Heart right ventricle (tissue), 16 donors: ENCODE measurements at regions of chr11 and their contacts with region 1.

Region 1: DNA sequence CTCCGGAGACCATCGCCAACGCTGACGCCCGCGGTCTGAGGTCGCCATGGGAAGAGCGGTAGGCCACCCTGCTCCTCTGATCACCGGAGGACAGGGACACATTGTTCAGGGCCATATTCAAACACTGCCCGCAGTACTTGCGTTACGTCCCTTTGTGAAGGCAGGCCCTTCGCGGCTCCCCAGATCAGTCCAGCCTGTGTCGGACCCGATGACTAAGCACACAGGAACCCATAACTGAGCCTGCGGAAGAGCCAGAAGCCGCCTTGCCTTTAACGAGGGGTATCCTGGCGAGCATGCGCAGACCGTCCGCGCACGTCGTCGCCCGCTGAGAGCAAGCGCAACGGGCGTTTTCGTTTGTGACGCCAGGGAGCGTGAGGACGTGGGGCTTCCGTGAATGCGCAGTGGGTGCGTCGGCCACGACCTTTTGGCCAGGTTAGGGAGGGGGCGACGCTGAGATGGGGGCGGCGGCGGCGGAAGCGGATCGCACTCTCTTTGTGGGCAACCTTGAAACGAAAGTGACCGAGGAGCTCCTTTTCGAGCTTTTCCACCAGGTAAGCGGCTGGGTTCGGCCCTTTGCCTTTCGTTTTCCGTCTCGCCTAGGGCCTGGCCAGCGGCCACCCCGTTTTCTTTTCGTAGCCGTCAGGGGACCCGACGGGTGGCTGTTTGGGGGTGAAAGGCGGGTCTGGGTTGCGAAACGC is at the starts of genes C11orf71 and RBM7:
- DNase-seq: peak; percentile 98 to 99
- ATAC-seq: peak; percentile 97 to 99 (median 98)
- H3K4me3 ChIP-seq: peak within 1 kb of the TSS; percentile 66 to 89 (median 76)
- H3K27ac ChIP-seq: peak within 1 kb of the TSS; percentile 93 to 100 (median 98)
- H3K4me1 ChIP-seq: peaks cover 0 to 73% (median 59%) of the 10 kb centered on the region in 9 donors
- H3K27me3 ChIP-seq: no peaks in the 10 kb centered on the region
- CTCF ChIP-seq: peak in 3 of 9 donors; percentile 14 to 23 (median 19)
- total RNA-seq, gene C11orf71: 7.1 to 14.4 (median 10.9) TPM
- total RNA-seq, gene RBM7: 16.8 to 29.3 (median 21.3) TPM

Region 2: GRCh38 chr11:114280696-114281095 is 119.7 kb before region 1 on chr11:
- intact Hi-C with region 1: loop called in 1 of 10 experiments (anchors 5 kb)
- DNase-seq: peak; percentile 41 to 68
- ATAC-seq: peak; percentile 74 to 92 (median 86)
- H3K4me3 ChIP-seq: no peak overlapping the region
- H3K27ac ChIP-seq: peak overlapping the region in 7 of 10 donors; percentile 18 to 79 (median 58)
- H3K4me1 ChIP-seq: peaks cover 4 to 30% (median 21%) of the 10 kb centered on the region in 9 donors
- H3K27me3 ChIP-seq: no peaks in the 10 kb centered on the region
- CTCF ChIP-seq: peak; percentile 48 to 83 (median 71)

Region 3: DNA sequence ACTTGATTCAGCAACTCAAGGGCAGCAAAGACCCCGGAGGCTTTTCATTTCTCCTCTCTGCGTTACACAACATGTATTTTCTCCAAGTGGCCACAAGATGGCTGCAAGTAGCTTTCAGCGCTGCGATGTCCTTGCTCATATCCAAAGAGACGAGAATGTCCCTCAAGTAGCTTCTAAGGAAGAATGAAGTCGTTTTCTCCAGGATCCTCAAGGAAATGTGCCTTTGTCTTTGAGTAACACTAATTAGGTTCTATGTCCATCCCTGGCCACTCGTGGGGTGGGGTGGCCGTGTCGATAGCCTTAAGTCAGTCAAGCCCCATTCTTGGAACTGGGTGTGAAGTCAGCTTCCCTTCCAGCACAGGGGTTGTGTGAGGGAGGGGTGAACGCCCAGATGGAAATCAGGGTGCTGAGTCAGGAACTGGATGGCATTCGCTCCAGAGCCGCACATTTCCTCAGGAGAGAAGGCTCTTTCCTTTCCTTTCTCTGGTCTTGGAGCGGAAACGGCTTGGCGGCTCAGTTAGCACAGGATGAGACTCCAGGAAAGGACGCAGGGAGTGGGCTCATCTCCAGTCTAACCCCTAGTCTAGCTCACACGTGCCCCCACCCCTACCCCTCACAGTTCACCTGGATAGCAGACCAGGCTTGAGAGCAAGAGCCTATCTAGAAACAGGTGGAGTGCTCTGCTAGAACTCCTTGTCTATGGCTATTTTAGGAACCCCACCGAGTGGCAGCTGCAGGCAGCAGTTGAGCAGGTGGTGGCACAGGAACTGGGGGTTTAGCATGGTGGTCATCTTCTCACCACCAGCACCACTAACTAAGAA is 59.8 kb before region 1 on chr11:
- intact Hi-C with region 1: loop called in 5 of 10 experiments (anchors 5 to 10 kb)
- DNase-seq: peak; percentile 15 to 31
- ATAC-seq: peak; percentile 77 to 92 (median 84)
- H3K4me3 ChIP-seq: peak overlapping the region in 7 of 10 donors; percentile 4 to 46 (median 37)
- H3K27ac ChIP-seq: peak overlapping the region in 9 of 10 donors; percentile 18 to 81 (median 50)
- H3K4me1 ChIP-seq: peaks cover 0 to 21% (median 10%) of the 10 kb centered on the region in 9 donors
- H3K27me3 ChIP-seq: no peaks in the 10 kb centered on the region
- CTCF ChIP-seq: peak; percentile 61 to 89 (median 79)

Region 4: DNA sequence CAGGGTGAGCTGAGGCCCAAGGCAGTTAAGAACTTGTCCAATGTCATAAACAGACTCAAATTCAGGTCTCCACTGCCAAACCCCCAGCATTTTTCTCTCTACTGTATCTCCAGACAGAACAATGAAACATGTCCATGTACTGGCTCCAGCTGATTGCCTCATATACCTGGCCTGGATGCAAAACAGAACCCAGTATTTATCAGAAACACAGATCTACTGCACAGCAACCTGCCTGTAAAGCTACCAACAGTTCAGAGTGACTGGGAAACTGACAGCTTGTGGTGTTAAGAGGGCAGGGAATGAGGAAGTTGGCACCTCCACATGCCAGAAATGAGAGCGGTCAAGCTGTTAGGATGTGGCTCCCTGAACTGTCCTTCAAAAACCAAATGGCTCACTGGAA is 41.6 kb before region 1 on chr11:
- intact Hi-C with region 1: loop called in 1 of 10 experiments (anchors 5 kb)
- DNase-seq: no peak
- ATAC-seq: peak in 1 of 8 donors; percentile 89
- H3K4me3 ChIP-seq: no peak overlapping the region
- H3K27ac ChIP-seq: no peak overlapping the region
- H3K4me1 ChIP-seq: no peaks in the 10 kb centered on the region
- H3K27me3 ChIP-seq: no peaks in the 10 kb centered on the region
- CTCF ChIP-seq: no peak

Region 5: GRCh38 chr11:114368918-114369680 is 31.3 kb before region 1 on chr11:
- intact Hi-C with region 1: no loop called
- DNase-seq: no peak
- ATAC-seq: no peak
- H3K4me3 ChIP-seq: no peak overlapping the region
- H3K27ac ChIP-seq: no peak overlapping the region
- H3K4me1 ChIP-seq: peaks cover 0 to 6% (median 0%) of the 10 kb centered on the region in 9 donors
- H3K27me3 ChIP-seq: peaks cover 0 to 8% (median 0%) of the 10 kb centered on the region in 7 donors
- CTCF ChIP-seq: no peak

Region 6: GRCh38 chr11:114416441-114416961 is 16.1 kb after region 1 on chr11:
- intact Hi-C with region 1: no loop called
- DNase-seq: peak in 1 of 2 donors; percentile 12
- ATAC-seq: peak in 2 of 8 donors; percentile 57 to 74
- H3K4me3 ChIP-seq: no peak overlapping the region
- H3K27ac ChIP-seq: no peak overlapping the region
- H3K4me1 ChIP-seq: peaks cover 0 to 12% (median 0%) of the 10 kb centered on the region in 9 donors
- H3K27me3 ChIP-seq: no peaks in the 10 kb centered on the region
- CTCF ChIP-seq: no peak

Region 7: GRCh38 chr11:114449845-114450244 is 49.5 kb after region 1 on chr11:
- intact Hi-C with region 1: loop called in 1 of 10 experiments (anchors 5 kb)
- DNase-seq: no peak
- ATAC-seq: no peak
- H3K4me3 ChIP-seq: no peak overlapping the region
- H3K27ac ChIP-seq: no peak overlapping the region
- H3K4me1 ChIP-seq: peaks cover 0 to 28% (median 11%) of the 10 kb centered on the region in 9 donors
- H3K27me3 ChIP-seq: no peaks in the 10 kb centered on the region
- CTCF ChIP-seq: no peak